MCF 10A (cell line): ENCODE measurements at regions of chr6 and their contacts with region 1.

Region 1: GRCh38 chr6:79777713-79778579 is 146.8 kb downstream of the SH3BGRL2 start:
- DNase-seq: peak; percentile 81
- H3K4me3 Mint-ChIP-seq: peak overlapping the region; percentile 63
- H3K27ac Mint-ChIP-seq: no peak overlapping the region
- H3K4me1 Mint-ChIP-seq: no peaks in the 10 kb centered on the region
- H3K27me3 Mint-ChIP-seq: no peaks in the 10 kb centered on the region
- CTCF ChIP-seq: peak; percentile 96

Region 2: GRCh38 chr6:79764747-79765146 is 13.2 kb before region 1 on chr6:
- CTCF ChIA-PET with region 1: interaction called, 14 read pairs
- POLR2A ChIA-PET with region 1: interaction called, 3 read pairs
- intact Hi-C with region 1: no loop called
- DNase-seq: no peak
- H3K4me3 Mint-ChIP-seq: no peak overlapping the region
- H3K27ac Mint-ChIP-seq: no peak overlapping the region
- H3K4me1 Mint-ChIP-seq: no peaks in the 10 kb centered on the region
- H3K27me3 Mint-ChIP-seq: no peaks in the 10 kb centered on the region
- CTCF ChIP-seq: no peak

Region 3: GRCh38 chr6:79789843-79790242 is 11.9 kb after region 1 on chr6:
- CTCF ChIA-PET with region 1: interaction called, 12 read pairs
- POLR2A ChIA-PET with region 1: no interaction called
- intact Hi-C with region 1: no loop called
- DNase-seq: no peak
- H3K4me3 Mint-ChIP-seq: no peak overlapping the region
- H3K27ac Mint-ChIP-seq: no peak overlapping the region
- H3K4me1 Mint-ChIP-seq: no peaks in the 10 kb centered on the region
- H3K27me3 Mint-ChIP-seq: no peaks in the 10 kb centered on the region
- CTCF ChIP-seq: no peak

Region 4: GRCh38 chr6:79808921-79809320 is 31.0 kb after region 1 on chr6:
- CTCF ChIA-PET with region 1: interaction called, 15 read pairs
- POLR2A ChIA-PET with region 1: interaction called, 3 read pairs
- intact Hi-C with region 1: loop called (anchors 1 kb)
- DNase-seq: no peak
- H3K4me3 Mint-ChIP-seq: no peak overlapping the region
- H3K27ac Mint-ChIP-seq: no peak overlapping the region
- H3K4me1 Mint-ChIP-seq: no peaks in the 10 kb centered on the region
- H3K27me3 Mint-ChIP-seq: no peaks in the 10 kb centered on the region
- CTCF ChIP-seq: no peak

Region 5: DNA sequence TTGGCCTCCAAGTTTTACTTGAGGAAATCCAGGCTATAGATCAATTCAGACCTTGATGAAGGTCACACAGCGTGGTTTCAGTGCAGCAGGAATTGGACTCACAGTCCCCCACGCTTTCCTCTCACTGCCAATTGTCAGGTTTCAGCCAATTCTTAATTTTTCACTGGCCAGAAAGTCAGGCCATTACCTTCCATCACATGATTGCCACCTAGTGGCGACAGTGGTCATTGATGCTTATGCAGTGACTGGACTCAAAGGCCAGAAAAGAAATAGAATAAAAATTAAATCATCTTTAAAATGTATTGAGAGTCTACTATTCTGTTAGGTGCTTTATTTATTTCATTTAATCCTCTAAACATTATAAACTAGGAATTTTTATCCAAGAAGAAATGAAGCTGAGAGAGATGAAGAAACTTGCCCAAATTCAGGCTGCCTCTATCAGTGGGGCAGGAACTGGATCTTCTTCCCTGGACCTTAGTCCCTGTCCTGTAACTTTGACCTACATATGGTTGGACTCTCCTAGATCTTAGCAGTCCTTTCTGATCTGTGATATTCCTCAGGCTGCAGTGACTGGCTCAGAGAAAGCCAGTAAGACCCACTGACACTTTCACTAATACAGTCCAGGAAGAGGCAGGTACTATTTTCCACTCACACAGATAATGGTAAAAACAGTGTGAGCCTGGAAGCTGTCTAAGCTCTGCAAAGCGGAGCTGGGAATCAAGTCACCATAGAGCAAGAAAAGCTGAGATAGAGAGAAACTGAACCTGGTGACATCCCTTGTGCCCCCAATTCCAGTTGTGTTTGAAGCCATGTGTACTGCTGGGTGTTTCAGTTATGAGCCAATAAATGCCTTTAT is 36.1 kb after region 1 on chr6:
- CTCF ChIA-PET with region 1: interaction called, 15 read pairs
- POLR2A ChIA-PET with region 1: interaction called, 3 read pairs
- intact Hi-C with region 1: loop called (anchors 1 kb)
- DNase-seq: peak; percentile 79
- H3K4me3 Mint-ChIP-seq: no peak overlapping the region
- H3K27ac Mint-ChIP-seq: no peak overlapping the region
- H3K4me1 Mint-ChIP-seq: no peaks in the 10 kb centered on the region
- H3K27me3 Mint-ChIP-seq: no peaks in the 10 kb centered on the region
- CTCF ChIP-seq: peak; percentile 77